PC-3 (cell line): ENCODE measurements at regions of chr16 and their contacts with region 1.

Region 1: DNA sequence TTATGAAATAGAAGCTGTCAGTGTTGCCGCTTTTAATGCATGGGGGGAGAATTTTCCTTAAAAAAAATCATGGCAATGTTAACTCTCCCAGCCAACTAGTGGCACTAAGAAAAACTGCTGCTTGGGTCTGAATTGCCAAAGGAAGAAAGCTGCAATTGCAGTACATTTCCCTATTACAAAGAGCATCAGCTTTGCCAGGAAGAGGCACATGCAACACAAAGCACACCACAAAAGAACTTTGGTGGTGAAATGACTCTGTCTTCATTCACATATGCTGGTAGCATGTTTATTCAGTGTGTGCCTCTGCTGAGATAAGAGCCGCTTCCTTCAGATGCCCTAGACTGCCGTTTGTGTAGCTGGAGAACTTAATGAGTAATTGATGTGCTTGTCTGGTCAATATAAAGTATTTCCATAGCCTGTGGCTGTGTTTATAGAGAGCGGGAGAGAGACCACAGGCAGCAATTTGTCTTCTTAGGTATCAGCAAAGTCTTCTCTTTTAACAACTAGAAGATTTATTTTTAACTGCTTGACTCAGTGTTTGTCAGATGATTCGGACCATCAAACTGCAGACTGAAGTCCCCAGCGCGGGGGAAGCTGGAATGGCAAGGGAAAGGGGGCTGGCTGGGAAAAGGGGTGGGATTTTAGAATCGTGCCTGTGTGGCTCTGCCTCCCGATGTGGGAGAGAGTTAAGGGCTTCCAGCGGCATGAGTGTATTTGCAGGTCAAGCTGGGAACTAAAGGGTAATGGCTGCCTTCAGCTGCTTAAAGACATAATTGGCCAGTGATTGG is 115.1 kb downstream of the MRTFB start:
- DNase-seq: peak; percentile 46
- ATAC-seq: peak; percentile 21; the same call in 1 of the 2 replicates
- H3K4me3 ChIP-seq: no peak overlapping the region
- H3K27ac ChIP-seq: peak overlapping the region; percentile 24
- H3K4me1 ChIP-seq: peaks cover 30% of the 10 kb centered on the region
- H3K27me3 ChIP-seq: no peaks in the 10 kb centered on the region
- CTCF ChIP-seq: peak; percentile 53; the same call in 1 of the 2 replicates

Region 2: GRCh38 chr16:14024300-14024699 is 161.9 kb before region 1 on chr16:
- CTCF ChIA-PET with region 1: no interaction called
- POLR2A ChIA-PET with region 1: no interaction called
- intact Hi-C with region 1: loop called (anchors 10 kb)
- DNase-seq: peak; percentile 10
- ATAC-seq: peak; percentile 35; the same call in 1 of the 2 replicates
- H3K4me3 ChIP-seq: no peak overlapping the region
- H3K27ac ChIP-seq: no peak overlapping the region
- H3K4me1 ChIP-seq: peaks cover 4% of the 10 kb centered on the region; the same call in 1 of the 2 replicates
- H3K27me3 ChIP-seq: no peaks in the 10 kb centered on the region
- CTCF ChIP-seq: no peak

Region 3: GRCh38 chr16:14097182-14097959 is 88.8 kb before region 1 on chr16:
- CTCF ChIA-PET with region 1: interaction called, 5 read pairs
- POLR2A ChIA-PET with region 1: no interaction called
- intact Hi-C with region 1: loop called (anchors 10 kb)
- DNase-seq: peak; percentile 93
- ATAC-seq: peak; percentile 65
- H3K4me3 ChIP-seq: peak overlapping the region; percentile 58
- H3K27ac ChIP-seq: peak overlapping the region; percentile 88
- H3K4me1 ChIP-seq: peaks cover 44% of the 10 kb centered on the region
- H3K27me3 ChIP-seq: no peaks in the 10 kb centered on the region
- CTCF ChIP-seq: no peak

Region 4: GRCh38 chr16:14219983-14220382 is 33.8 kb after region 1 on chr16:
- CTCF ChIA-PET with region 1: no interaction called
- POLR2A ChIA-PET with region 1: no interaction called
- intact Hi-C with region 1: no loop called
- DNase-seq: no peak
- ATAC-seq: no peak
- H3K4me3 ChIP-seq: no peak overlapping the region
- H3K27ac ChIP-seq: no peak overlapping the region
- H3K4me1 ChIP-seq: no peaks in the 10 kb centered on the region
- H3K27me3 ChIP-seq: no peaks in the 10 kb centered on the region
- CTCF ChIP-seq: no peak

Region 5: GRCh38 chr16:14232106-14232864 is 46.1 kb after region 1 on chr16:
- CTCF ChIA-PET with region 1: no interaction called
- POLR2A ChIA-PET with region 1: no interaction called
- intact Hi-C with region 1: loop called (anchors 1 kb)
- DNase-seq: peak; percentile 3
- ATAC-seq: peak; percentile 82
- H3K4me3 ChIP-seq: no peak overlapping the region
- H3K27ac ChIP-seq: no peak overlapping the region
- H3K4me1 ChIP-seq: peaks cover 9% of the 10 kb centered on the region
- H3K27me3 ChIP-seq: no peaks in the 10 kb centered on the region
- CTCF ChIP-seq: no peak